GM12878 (cell line): ENCODE measurements at regions of chr18 and their contacts with region 1.

Region 1: GRCh38 chr18:21760321-21760720 is 19.7 kb downstream of the MIB1 start:
- DNase-seq: no peak
- ATAC-seq: no peak
- H3K4me3 ChIP-seq: no peak overlapping the region
- H3K27ac ChIP-seq: no peak overlapping the region
- H3K4me1 ChIP-seq: peaks cover 20% of the 10 kb centered on the region; the same call in 1 of the 2 replicates
- H3K27me3 ChIP-seq: no peaks in the 10 kb centered on the region
- CTCF ChIP-seq: no peak
- EP300 ChIP-seq: no peak
- POLR2A ChIP-seq: no peak
- RAD21 ChIP-seq: no peak

Region 2: DNA sequence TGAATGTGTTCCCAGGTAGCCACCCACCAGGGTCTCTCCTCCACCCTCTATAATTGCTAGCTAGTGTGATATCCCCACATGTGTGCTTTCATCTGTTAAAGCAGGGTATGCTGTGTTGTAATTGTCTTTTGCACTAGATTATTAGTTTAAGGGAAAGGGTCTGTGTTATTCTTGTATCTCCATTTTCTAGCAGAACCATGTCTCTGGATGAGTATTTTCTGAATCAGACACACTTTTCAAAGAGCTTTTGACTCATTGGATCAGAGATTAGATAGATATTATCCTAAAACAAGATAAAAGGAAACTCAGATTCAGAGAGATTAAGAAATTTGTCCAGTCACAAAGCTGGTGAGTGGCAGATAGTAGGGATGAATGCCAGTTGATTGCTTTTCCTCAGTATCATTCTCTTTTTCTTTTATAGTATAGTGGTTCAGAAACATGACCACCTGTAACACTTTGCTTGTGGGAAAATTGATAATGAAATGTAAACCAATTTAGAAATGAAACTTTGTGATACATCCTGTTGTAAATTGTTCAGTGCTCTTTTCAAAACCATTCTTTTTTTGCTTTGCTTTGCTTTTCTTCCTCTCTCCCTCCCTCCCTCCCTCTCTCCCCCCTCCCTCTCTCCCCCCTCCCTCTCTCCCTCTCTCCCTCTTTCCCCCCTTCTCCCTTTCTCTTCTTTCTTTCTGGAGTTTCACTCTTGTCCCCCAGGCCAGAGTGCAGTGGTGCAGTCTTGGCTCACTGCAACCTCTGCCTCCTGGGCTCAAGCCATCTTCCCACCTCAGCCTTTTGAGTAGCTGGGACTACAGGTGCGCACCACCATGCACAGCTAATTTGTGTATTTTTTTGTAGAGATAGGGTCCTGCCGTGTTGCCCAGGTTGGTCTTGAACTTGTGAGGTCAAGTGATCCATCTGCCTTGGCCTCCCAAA is 12.3 kb before region 1 on chr18:
- CTCF ChIA-PET with region 1: interaction called, 8 read pairs
- POLR2A ChIA-PET with region 1: interaction called, 8 read pairs
- RAD21 ChIA-PET with region 1: interaction called, 4 read pairs
- SMC1A ChIA-PET with region 1: interaction called, 33 read pairs
- in situ Hi-C with region 1: no loop called
- intact Hi-C with region 1: no loop called
- DNase-seq: no peak
- ATAC-seq: peak; percentile 32
- H3K4me3 ChIP-seq: peak overlapping the region; percentile 20; the same call in 1 of the 2 replicates
- H3K27ac ChIP-seq: peak overlapping the region; percentile 15; the same call in 1 of the 2 replicates
- H3K4me1 ChIP-seq: 0 out of 2 replicates have a peak, but pooled peaks cover 7% of the 10 kb centered on the region
- H3K27me3 ChIP-seq: no peaks in the 10 kb centered on the region
- CTCF ChIP-seq: no peak
- EP300 ChIP-seq: no peak
- POLR2A ChIP-seq: no peak
- RAD21 ChIP-seq: no peak